ENCODE measurements at regions of chr9 and their contacts with region 1.

Region 1: DNA sequence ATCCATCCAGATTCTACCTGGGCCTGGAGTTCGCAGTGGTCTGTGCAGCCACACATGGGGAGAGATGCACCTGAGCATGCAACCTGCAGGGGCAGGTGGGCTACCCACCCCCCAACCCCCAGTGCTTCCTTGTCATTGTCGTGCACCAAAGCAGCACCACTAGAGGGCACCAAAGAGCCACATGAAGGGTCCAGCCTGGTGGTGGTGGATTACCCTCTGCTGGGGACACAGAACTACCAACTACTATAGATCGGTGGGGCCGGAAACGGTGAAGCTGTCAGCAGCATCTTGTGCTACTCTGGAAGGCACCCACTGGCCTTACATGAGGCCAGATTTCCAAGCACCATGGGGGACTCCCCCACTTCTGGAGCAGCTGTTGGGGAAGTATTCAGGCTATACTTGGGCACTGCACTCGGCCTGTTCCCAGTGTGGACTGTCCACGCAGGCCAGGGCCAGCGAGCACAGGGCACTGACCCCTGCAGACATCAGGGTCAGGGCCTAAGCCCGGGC is 60.2 kb upstream of the TBC1D2 start:
- DNase-seq: peak; percentile 12
- H3K4me3 ChIP-seq: no peak overlapping the region
- H3K27ac ChIP-seq: no peak overlapping the region
- H3K4me1 ChIP-seq: no peaks in the 10 kb centered on the region
- H3K27me3 ChIP-seq: no peaks in the 10 kb centered on the region
- CTCF ChIP-seq: peak; percentile 71 to 89 (median 82)
- POLR2A ChIP-seq: no peak

Region 2: DNA sequence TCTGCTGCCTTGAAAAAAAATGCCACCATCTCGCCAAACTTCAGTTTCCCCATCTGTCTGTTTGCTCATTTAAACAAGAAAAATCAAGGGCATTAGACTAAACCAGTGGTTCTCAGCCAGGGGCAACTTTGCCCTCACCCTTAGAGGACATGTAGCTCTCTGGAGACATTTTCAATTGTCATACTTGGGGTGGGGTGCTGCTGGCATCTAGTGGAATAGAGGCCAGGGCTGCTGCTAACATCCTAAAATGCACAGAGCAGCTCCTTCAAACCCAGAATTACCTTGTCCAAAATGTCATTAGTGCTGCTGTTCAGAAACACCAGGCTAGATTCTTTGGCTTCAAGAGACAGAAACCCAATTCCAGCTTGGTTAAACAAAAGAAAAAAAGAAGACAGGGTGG is 533.7 kb before region 1 on chr9:
- intact Hi-C with region 1: no loop called
- DNase-seq: no peak
- H3K4me3 ChIP-seq: no peak overlapping the region
- H3K27ac ChIP-seq: peak overlapping the region in 3 of 4 donors; percentile 63 to 79 (median 73)
- H3K4me1 ChIP-seq: peaks cover 0 to 33% (median 10%) of the 10 kb centered on the region in 3 donors
- H3K27me3 ChIP-seq: peaks cover 0 to 7% (median 1%) of the 10 kb centered on the region in 4 donors
- CTCF ChIP-seq: peak in 3 of 6 experiments; percentile 7 to 41 (median 8)
- POLR2A ChIP-seq: no peak

Region 3: DNA sequence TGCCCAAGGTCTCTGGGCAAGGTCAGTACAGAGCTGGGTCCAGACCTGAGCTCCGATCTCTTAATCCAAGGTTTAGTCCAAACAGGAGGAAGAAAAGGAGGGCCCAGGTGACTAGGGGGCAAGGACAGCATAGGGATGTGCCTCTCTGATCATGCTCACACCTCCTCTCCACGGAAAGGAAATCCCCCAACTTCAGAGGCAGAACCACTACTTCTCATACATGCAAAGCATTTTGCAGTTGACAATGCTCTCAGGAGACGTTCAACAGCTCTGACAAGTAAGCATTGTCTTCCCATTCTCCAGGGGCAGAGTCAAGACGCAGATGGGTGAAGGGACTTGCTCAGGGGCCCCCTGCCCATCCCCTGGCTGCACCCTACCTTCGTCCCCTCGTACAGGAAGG is 114.5 kb before region 1 on chr9:
- intact Hi-C with region 1: no loop called
- DNase-seq: no peak
- H3K4me3 ChIP-seq: no peak overlapping the region
- H3K27ac ChIP-seq: no peak overlapping the region
- H3K4me1 ChIP-seq: peaks cover 0 to 7% (median 3%) of the 10 kb centered on the region in 3 donors
- H3K27me3 ChIP-seq: no peaks in the 10 kb centered on the region
- CTCF ChIP-seq: no peak
- POLR2A ChIP-seq: no peak

Region 4: DNA sequence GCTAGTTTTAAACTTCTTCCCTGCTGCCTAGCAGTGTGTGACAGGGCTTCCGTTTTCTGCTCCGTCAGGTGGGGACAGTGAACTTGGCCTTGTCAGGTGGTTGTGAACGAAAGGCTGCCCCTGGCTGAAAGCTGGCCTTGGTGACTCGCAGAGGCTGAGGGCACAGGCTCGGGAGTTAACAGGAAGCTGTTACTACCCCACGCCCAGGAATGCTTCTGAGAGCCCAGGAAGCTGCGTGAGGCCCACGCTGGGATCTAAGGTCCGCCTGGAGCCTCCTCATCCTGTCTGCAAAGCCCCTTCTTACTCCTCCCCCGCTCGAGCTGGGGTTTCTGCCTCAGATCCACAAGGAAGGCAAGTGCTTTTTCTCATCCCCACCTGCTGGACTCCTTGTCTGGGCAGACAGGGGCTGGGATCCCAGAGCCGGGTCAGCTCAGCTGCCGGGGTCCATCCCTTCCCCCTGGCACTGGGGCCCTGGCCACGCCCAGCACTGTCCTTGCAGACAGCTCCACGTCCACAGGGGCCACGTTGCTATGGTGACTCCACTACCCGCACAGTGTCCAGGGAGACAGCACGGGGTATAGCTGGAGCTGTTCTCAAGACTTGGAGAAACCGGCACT is 64.6 kb after region 1 on chr9:
- intact Hi-C with region 1: no loop called
- DNase-seq: no peak
- H3K4me3 ChIP-seq: no peak overlapping the region
- H3K27ac ChIP-seq: no peak overlapping the region
- H3K4me1 ChIP-seq: no peaks in the 10 kb centered on the region
- H3K27me3 ChIP-seq: no peaks in the 10 kb centered on the region
- CTCF ChIP-seq: no peak
- POLR2A ChIP-seq: no peak

Region 5: GRCh38 chr9:98796364-98797101 is 480.9 kb after region 1 on chr9 and contains the start of gene ANKS6:
- intact Hi-C with region 1: loop called (anchors 10 kb)
- DNase-seq: no peak
- H3K4me3 ChIP-seq: peak within 1 kb of the TSS; percentile 58 to 89 (median 74)
- H3K27ac ChIP-seq: peak within 1 kb of the TSS; percentile 80 to 89 (median 86)
- H3K4me1 ChIP-seq: peaks cover 7 to 55% (median 21%) of the 10 kb centered on the region in 3 donors
- H3K27me3 ChIP-seq: no peaks in the 10 kb centered on the region
- CTCF ChIP-seq: peak; percentile 15 to 76 (median 60)
- POLR2A ChIP-seq: peak in 2 of 4 donors; percentile 33 to 49
- total RNA-seq, gene ANKS6: 11.0 to 21.7 (median 15.3) TPM